ENCODE measurements at regions of chr1 and their contacts with region 1.

Region 1: GRCh38 chr1:154379301-154379700 is 25.8 kb upstream of the IL6R start:
- DNase-seq: no peak
- ATAC-seq: no peak
- H3K4me3 ChIP-seq: no peak overlapping the region
- H3K27ac ChIP-seq: no peak overlapping the region
- H3K4me1 ChIP-seq: no peaks in the 10 kb centered on the region
- H3K27me3 ChIP-seq: no peaks in the 10 kb centered on the region
- CTCF ChIP-seq: no peak
- EP300 ChIP-seq: no peak
- POLR2A ChIP-seq: no peak
- RAD21 ChIP-seq: no peak

Region 2: GRCh38 chr1:154361357-154361756 is 17.9 kb before region 1 on chr1:
- CTCF ChIA-PET with region 1: interaction called, 3 read pairs
- POLR2A ChIA-PET with region 1: interaction called, 10 read pairs
- RAD21 ChIA-PET with region 1: no interaction called
- SMC1A ChIA-PET with region 1: interaction called, 3 read pairs
- in situ Hi-C with region 1: no loop called
- intact Hi-C with region 1: no loop called
- DNase-seq: no peak
- ATAC-seq: no peak
- H3K4me3 ChIP-seq: no peak overlapping the region
- H3K27ac ChIP-seq: no peak overlapping the region
- H3K4me1 ChIP-seq: no peaks in the 10 kb centered on the region
- H3K27me3 ChIP-seq: peaks cover 0 to 3% of the 10 kb centered on the region in 2 experiments; a peak in 1 of 4 replicates
- CTCF ChIP-seq: no peak
- EP300 ChIP-seq: no peak
- POLR2A ChIP-seq: no peak
- RAD21 ChIP-seq: no peak

Region 3: GRCh38 chr1:154429118-154429517 is 49.8 kb after region 1 on chr1:
- CTCF ChIA-PET with region 1: no interaction called
- POLR2A ChIA-PET with region 1: no interaction called
- RAD21 ChIA-PET with region 1: no interaction called
- SMC1A ChIA-PET with region 1: no interaction called
- in situ Hi-C with region 1: no loop called
- intact Hi-C with region 1: no loop called
- DNase-seq: no peak
- ATAC-seq: no peak
- H3K4me3 ChIP-seq: no peak overlapping the region
- H3K27ac ChIP-seq: no peak overlapping the region
- H3K4me1 ChIP-seq: peaks cover 6% of the 10 kb centered on the region; the same call in 1 of the 2 replicates
- H3K27me3 ChIP-seq: no peaks in the 10 kb centered on the region
- CTCF ChIP-seq: no peak
- EP300 ChIP-seq: no peak
- POLR2A ChIP-seq: no peak
- RAD21 ChIP-seq: no peak